ENCODE measurements at regions of chr11 and their contacts with region 1.

Region 1: DNA sequence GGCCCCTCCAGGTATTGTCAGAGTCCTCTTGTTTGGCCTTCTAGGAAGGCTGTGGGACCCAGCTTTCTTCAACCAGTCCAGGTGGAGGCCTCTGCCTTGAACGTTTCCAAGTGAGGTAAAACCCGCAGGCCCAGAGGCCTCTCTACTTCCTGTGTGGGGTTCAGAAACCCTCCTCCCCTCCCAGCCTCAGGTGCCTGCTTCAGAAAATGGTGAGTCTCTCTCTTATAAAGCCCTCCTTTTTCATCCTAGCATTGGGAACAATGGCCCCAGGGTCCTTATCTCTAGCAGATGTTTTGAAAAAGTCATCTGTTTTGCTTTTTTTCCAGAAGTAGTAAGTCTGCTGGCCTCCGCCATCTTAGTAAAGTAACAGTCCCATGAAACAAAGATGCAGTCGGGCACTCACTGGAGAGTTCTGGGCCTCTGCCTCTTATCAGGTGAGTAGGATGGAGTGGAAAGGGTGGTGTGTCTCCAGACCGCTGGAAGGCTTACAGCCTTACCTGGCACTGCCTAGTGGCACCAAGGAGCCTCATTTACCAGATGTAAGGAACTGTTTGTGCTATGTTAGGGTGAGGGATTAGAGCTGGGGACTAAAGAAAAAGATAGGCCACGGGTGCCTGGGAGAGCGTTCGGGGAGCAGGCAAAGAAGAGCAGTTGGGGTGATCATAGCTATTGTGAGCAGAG is at the start of gene CD3E:
- DNase-seq: peak; percentile 40 to 85 (median 76)
- H3K4me3 ChIP-seq: peak within 1 kb of the TSS; percentile 82
- H3K4me3 Mint-ChIP-seq: peak within 1 kb of the TSS; percentile 99 to 100 (median 100)
- H3K27ac ChIP-seq: peak within 1 kb of the TSS; percentile 72
- H3K27ac Mint-ChIP-seq: peak within 1 kb of the TSS; percentile 93 to 100 (median 99)
- H3K4me1 ChIP-seq: peaks cover 54% of the 10 kb centered on the region
- H3K4me1 Mint-ChIP-seq: peaks cover 68 to 82% (median 74%) of the 10 kb centered on the region in 3 donors
- H3K27me3 ChIP-seq: no peaks in the 10 kb centered on the region
- H3K27me3 Mint-ChIP-seq: no peaks in the 10 kb centered on the region
- total RNA-seq, gene CD3E: 534 to 541 TPM

Region 2: DNA sequence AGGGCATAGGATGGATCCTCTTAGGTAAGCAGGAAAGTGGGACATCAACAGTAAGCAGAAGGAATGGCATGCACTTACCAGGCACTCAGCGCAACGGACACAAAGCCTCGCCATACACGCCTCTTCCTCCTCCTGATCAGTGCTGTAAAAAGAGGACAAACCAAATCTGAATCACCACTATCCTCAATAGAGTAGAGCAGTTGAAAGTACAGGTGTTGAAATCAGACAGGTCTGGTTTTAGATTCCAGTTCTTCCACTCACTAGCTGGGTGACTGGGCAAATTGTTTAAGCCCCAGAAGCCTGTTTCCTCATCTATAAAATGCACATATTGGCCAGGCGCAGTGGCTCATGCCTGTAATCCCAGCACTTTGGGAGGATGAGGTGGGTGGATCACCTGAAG is 71.3 kb before region 1 on chr11:
- CTCF ChIA-PET with region 1: no interaction called
- POLR2A ChIA-PET with region 1: no interaction called
- DNase-seq: no peak
- H3K4me3 ChIP-seq: no peak overlapping the region
- H3K4me3 Mint-ChIP-seq: no peak overlapping the region
- H3K27ac ChIP-seq: no peak overlapping the region
- H3K27ac Mint-ChIP-seq: peak overlapping the region in 5 of 8 donors; percentile 1 to 59 (median 52)
- H3K4me1 ChIP-seq: peaks cover 31% of the 10 kb centered on the region
- H3K4me1 Mint-ChIP-seq: peaks cover 19 to 37% (median 21%) of the 10 kb centered on the region in 3 donors
- H3K27me3 ChIP-seq: no peaks in the 10 kb centered on the region
- H3K27me3 Mint-ChIP-seq: no peaks in the 10 kb centered on the region

Region 3: DNA sequence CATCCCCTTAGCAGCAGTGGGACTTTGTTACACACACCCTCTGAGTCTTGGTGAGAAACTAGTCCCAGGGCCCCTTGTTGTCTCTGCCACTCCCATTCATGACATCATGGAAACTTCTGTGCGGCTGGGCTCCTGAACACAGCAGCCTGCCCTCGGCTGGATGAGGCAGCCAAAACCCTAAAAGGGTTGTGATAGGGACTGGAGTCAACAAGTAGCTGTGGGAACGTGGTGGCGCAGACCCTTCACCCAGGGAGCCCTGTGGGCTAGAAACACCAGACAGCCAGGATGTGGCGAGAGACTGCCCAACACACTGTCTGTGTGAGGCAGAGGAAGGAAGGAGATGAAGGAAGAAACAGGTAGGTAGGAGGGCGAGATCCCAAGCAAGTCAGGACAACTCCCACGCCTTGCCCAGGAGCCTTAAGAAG is 33.9 kb after region 1 on chr11:
- CTCF ChIA-PET with region 1: no interaction called
- POLR2A ChIA-PET with region 1: interaction called, 24 read pairs
- DNase-seq: peak; percentile 80 to 98 (median 90)
- H3K4me3 ChIP-seq: peak overlapping the region; percentile 99
- H3K4me3 Mint-ChIP-seq: peak overlapping the region; percentile 90 to 99 (median 94)
- H3K27ac ChIP-seq: peak overlapping the region; percentile 87
- H3K27ac Mint-ChIP-seq: peak overlapping the region; percentile 94 to 100 (median 99)
- H3K4me1 ChIP-seq: peaks cover 72% of the 10 kb centered on the region
- H3K4me1 Mint-ChIP-seq: peaks cover 57 to 73% (median 69%) of the 10 kb centered on the region in 3 donors
- H3K27me3 ChIP-seq: no peaks in the 10 kb centered on the region
- H3K27me3 Mint-ChIP-seq: peaks cover 0 to 4% of the 10 kb centered on the region in 2 donors

Region 4: DNA sequence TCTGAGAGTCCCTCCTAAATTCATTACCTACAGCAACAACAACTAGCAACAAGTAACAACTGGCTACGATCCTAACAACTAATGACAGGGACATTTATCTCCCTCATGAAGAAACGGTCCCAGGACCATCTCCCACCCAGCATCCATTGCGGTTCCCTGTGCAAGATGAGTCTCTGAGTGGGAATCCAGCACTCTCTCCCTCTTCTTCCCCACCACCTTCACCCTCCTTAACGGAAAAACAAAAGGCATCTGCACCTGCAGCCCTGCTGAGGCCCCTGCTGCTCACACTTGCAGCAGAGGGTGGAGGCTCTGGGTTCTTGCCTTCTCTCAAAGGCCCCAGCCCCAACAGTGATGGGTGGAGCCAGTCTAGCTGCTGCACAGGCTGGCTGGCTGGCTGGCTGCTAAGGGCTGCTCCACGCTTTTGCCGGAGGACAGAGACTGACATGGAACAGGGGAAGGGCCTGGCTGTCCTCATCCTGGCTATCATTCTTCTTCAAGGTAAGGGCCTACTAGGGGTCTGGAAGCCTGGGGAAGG is 39.3 kb after region 1 on chr11 and contains the start of gene CD3G:
- CTCF ChIA-PET with region 1: no interaction called
- POLR2A ChIA-PET with region 1: interaction called, 27 read pairs
- DNase-seq: peak; percentile 40 to 87 (median 63)
- H3K4me3 ChIP-seq: peak within 1 kb of the TSS; percentile 99
- H3K4me3 Mint-ChIP-seq: peak within 1 kb of the TSS; percentile 90 to 99 (median 94)
- H3K27ac ChIP-seq: peak within 1 kb of the TSS; percentile 87
- H3K27ac Mint-ChIP-seq: peak within 1 kb of the TSS; percentile 94 to 100 (median 99)
- H3K4me1 ChIP-seq: peaks cover 56% of the 10 kb centered on the region
- H3K4me1 Mint-ChIP-seq: peaks cover 68 to 77% (median 69%) of the 10 kb centered on the region in 3 donors
- H3K27me3 ChIP-seq: no peaks in the 10 kb centered on the region
- H3K27me3 Mint-ChIP-seq: no peaks in the 10 kb centered on the region
- total RNA-seq, gene CD3G: 167 to 170 TPM

Region 5: DNA sequence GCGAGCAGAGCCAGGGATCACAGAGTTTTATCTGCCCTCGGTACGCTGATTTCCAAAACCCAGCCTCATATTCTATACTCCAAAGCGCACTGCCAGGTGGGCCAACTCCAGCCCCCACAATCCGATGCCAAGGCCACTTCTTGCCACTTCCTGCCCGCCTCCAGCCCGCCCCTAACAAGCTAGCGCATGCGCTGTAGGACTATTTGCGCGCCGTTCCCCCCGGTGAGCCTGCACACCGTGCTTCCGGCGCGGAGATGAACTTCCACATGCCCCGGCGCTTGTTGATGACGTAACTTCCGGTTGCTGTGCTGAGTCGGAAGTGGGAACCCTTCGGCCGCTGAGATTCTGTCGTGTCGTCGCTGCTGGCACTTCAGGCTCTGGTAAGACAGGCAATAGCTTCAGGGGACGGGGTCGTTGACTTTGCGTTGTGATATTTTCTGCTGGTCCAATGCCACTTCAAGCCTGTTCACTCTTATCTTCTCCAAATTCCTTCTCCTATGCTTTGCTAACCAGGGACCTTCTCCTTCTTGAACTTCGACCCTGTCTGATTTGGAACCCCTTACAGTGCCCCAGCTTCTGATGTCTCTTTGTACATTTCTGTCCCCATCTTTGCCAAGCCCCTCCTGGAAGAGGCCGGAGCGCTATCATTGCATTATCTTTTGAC is 54.7 kb after region 1 on chr11 and contains the start of gene UBE4A:
- CTCF ChIA-PET with region 1: interaction called, 3 read pairs
- POLR2A ChIA-PET with region 1: interaction called, 10 read pairs
- DNase-seq: peak; percentile 93 to 99 (median 95)
- H3K4me3 ChIP-seq: peak within 1 kb of the TSS; percentile 96
- H3K4me3 Mint-ChIP-seq: peak within 1 kb of the TSS; percentile 91 to 99 (median 97)
- H3K27ac ChIP-seq: peak within 1 kb of the TSS; percentile 95
- H3K27ac Mint-ChIP-seq: peak within 1 kb of the TSS; percentile 95 to 100 (median 98)
- H3K4me1 ChIP-seq: peaks cover 35% of the 10 kb centered on the region
- H3K4me1 Mint-ChIP-seq: peaks cover 41 to 57% (median 56%) of the 10 kb centered on the region in 3 donors
- H3K27me3 ChIP-seq: no peaks in the 10 kb centered on the region
- H3K27me3 Mint-ChIP-seq: peaks cover 0 to 7% of the 10 kb centered on the region in 2 donors
- total RNA-seq, gene UBE4A: 55.9 to 56.8 TPM

Region 6: DNA sequence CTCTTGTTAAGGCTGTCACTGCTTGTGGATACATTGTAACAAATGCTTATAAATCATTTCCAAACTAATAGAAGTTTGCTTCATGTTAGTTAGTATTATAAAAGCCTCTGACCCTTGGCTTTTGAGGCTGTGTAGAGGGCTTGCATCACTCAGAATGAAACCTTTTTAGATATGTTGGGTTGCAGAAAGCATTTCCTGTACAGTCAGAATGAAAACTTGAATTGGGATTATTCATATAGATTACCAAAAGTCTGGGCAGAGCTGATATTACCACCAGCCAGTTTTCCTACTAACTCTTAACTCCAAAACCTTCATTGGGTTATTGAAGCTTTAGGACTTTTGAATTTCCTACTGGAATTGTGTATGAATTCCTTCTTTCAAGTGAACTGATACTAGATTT is 143.6 kb after region 1 on chr11:
- CTCF ChIA-PET with region 1: no interaction called
- POLR2A ChIA-PET with region 1: no interaction called
- DNase-seq: no peak
- H3K4me3 ChIP-seq: no peak overlapping the region
- H3K4me3 Mint-ChIP-seq: peak overlapping the region in 2 of 7 donors; percentile 13 to 34
- H3K27ac ChIP-seq: no peak overlapping the region
- H3K27ac Mint-ChIP-seq: peak overlapping the region in 6 of 8 donors; percentile 14 to 57 (median 47)
- H3K4me1 ChIP-seq: peaks cover 54% of the 10 kb centered on the region
- H3K4me1 Mint-ChIP-seq: peaks cover 68 to 83% (median 82%) of the 10 kb centered on the region in 3 donors
- H3K27me3 ChIP-seq: no peaks in the 10 kb centered on the region
- H3K27me3 Mint-ChIP-seq: no peaks in the 10 kb centered on the region